ENCODE measurements at regions of chr5 and their contacts with region 1.

Region 1: DNA sequence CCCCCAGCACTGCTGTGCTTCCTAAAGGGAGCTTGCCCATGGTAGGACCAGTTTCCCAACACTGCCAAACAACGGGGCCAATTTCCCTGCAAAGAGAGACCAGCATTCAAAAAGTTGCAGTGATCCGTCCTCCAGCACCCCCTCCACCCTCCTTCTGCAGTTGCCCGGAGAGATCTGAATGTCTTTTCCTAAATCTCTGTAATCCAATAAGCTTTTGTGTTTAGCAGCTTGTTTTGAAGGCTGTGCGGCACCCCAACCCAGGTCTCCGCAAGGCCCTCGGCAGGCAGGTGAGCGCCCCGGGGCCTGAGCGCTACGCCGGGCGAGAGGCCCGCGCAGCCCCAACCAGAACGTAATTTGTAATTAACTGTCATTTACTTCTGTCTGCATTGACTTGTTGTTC is 366.9 kb upstream of the IRX2 start:
- DNase-seq: peak in 1 of 2 experiments; percentile 54
- H3K4me3 ChIP-seq: peak overlapping the region in 1 of 4 experiments; percentile 42; a peak in 3 of 8 replicates
- H3K27ac ChIP-seq: no peak overlapping the region
- H3K4me1 ChIP-seq: peaks cover 18 to 61% (median 43%) of the 10 kb centered on the region in 4 experiments
- H3K27me3 ChIP-seq: peaks cover 5 to 50% (median 32%) of the 10 kb centered on the region in 4 experiments
- CTCF ChIP-seq: no peak
- EP300 ChIP-seq: no peak
- POLR2A ChIP-seq: no peak
- RAD21 ChIP-seq: no peak

Region 2: GRCh38 chr5:3100921-3101600 is 17.3 kb before region 1 on chr5:
- CTCF ChIA-PET with region 1: interaction called, 4 read pairs
- POLR2A ChIA-PET with region 1: interaction called, 17 read pairs
- DNase-seq: peak in 1 of 2 experiments; percentile 86
- H3K4me3 ChIP-seq: peak overlapping the region in 1 of 4 experiments; percentile 7; a peak in 1 of 8 replicates
- H3K27ac ChIP-seq: peak overlapping the region; percentile 83
- H3K4me1 ChIP-seq: peaks cover 22 to 60% (median 39%) of the 10 kb centered on the region in 4 experiments
- H3K27me3 ChIP-seq: no peaks in the 10 kb centered on the region; a peak in 2 of 7 replicates
- CTCF ChIP-seq: no peak
- EP300 ChIP-seq: peak in 1 of 2 experiments; percentile 74; a peak in 1 of 3 replicates
- POLR2A ChIP-seq: no peak
- RAD21 ChIP-seq: no peak; a peak in 1 of 4 replicates